Kidney (tissue), 22 donors: ENCODE measurements at regions of chr9 and their contacts with region 1.

Region 1: DNA sequence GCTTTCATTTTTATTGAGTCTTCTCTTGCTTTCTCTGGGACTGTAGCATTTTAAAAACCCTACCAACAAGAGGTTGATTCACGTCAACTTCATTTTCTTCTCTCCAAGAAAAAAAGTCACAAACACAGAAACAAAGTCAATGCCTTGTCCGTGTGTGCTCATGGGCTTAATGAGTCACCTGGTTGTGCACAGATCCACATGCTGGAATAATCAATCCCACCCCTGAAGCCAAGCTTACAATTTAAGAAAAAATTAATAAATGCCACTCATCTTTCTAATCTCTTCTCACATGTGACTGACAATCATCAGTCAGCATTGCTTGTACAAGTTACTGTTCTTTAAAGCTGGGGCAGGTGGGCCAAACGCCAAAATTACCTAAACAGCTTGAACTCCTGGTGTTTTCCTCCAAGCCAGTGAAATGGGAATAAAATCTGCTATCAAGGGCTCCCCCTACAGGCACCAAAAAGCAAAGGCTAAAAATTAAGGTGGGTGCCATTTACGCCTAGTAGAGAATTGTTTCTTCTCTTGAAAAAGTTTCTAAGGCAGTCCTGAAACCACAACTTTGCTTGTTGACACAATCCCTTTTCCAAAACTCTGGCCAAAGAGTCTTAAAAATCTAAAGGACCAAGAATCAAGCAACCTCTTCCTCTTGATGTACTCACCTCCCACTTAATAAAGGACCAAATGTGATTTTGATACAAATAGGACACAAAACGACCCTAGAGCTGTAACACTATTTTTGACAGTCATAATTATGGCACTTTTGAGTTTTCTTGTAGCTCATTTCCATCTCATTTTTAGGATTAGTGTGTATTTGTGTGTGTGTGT is 21.3 kb downstream of the TRMO start:
- DNase-seq: peak in 2 of 5 donors; percentile 45 to 67
- H3K4me3 ChIP-seq: no peak overlapping the region
- H3K27ac ChIP-seq: no peak overlapping the region
- H3K4me1 ChIP-seq: no peaks in the 10 kb centered on the region
- H3K27me3 ChIP-seq: no peaks in the 10 kb centered on the region
- CTCF ChIP-seq: peak; percentile 60

Region 2: GRCh38 chr9:97710356-97711222 is 190.4 kb before region 1 on chr9:
- intact Hi-C with region 1: loop called (anchors 5 kb)
- DNase-seq: peak in 4 of 5 donors; percentile 69 to 85 (median 76)
- H3K4me3 ChIP-seq: no peak overlapping the region
- H3K27ac ChIP-seq: no peak overlapping the region
- H3K4me1 ChIP-seq: peaks cover 0 to 3% (median 3%) of the 10 kb centered on the region in 3 donors
- H3K27me3 ChIP-seq: no peaks in the 10 kb centered on the region
- CTCF ChIP-seq: peak; percentile 87